ENCODE measurements at regions of chr13 and their contacts with region 1.

Region 1: DNA sequence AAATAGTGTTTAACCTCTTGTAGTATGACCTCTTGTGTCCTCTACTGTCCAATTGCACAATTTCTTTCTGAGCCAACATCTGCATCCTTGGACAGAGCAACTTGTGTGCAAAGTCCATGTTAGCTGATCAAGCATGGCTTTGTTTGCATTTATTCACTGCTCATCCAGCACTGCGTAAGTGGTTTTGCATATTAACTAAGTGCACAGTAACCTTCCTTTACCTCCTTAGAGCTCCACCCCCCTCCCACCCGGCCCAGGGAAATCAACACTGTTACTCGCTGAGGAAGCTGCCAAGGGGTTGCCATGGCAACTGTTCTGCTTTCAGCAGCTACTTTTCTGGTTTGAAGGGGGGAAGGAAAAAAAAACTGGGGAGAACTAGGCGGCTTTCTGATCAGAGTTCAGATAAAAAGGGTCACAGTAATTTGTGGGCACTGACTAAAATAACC is 153.5 kb upstream of the KLF12 start:
- DNase-seq: peak; percentile 85
- ATAC-seq: peak; percentile 61

Region 2: GRCh38 chr13:73754727-73755292 is 532.9 kb before region 1 on chr13:
- intact Hi-C with region 1: loop called (anchors 10 kb)
- DNase-seq: no peak
- ATAC-seq: peak; percentile 81

Region 3: GRCh38 chr13:73835138-73835721 is 452.5 kb before region 1 on chr13:
- intact Hi-C with region 1: loop called (anchors 5 kb)
- DNase-seq: no peak
- ATAC-seq: peak; percentile 74

Region 4: GRCh38 chr13:74158028-74158427 is 129.7 kb before region 1 on chr13:
- intact Hi-C with region 1: loop called (anchors 10 kb)
- DNase-seq: peak; percentile 41
- ATAC-seq: peak; percentile 34

Measured in Right ventricle myocardium superior (tissue), 1 donor.